ENCODE measurements at regions of chr11 and their contacts with region 1.

Region 1: GRCh38 chr11:3905080-3905953 is 49.9 kb downstream of the STIM1 start:
- DNase-seq: peak; percentile 58
- H3K4me3 Mint-ChIP-seq: peak overlapping the region; percentile 1
- H3K27ac Mint-ChIP-seq: peak overlapping the region; percentile 71
- H3K4me1 Mint-ChIP-seq: peaks cover 67% of the 10 kb centered on the region
- H3K27me3 Mint-ChIP-seq: no peaks in the 10 kb centered on the region

Region 2: DNA sequence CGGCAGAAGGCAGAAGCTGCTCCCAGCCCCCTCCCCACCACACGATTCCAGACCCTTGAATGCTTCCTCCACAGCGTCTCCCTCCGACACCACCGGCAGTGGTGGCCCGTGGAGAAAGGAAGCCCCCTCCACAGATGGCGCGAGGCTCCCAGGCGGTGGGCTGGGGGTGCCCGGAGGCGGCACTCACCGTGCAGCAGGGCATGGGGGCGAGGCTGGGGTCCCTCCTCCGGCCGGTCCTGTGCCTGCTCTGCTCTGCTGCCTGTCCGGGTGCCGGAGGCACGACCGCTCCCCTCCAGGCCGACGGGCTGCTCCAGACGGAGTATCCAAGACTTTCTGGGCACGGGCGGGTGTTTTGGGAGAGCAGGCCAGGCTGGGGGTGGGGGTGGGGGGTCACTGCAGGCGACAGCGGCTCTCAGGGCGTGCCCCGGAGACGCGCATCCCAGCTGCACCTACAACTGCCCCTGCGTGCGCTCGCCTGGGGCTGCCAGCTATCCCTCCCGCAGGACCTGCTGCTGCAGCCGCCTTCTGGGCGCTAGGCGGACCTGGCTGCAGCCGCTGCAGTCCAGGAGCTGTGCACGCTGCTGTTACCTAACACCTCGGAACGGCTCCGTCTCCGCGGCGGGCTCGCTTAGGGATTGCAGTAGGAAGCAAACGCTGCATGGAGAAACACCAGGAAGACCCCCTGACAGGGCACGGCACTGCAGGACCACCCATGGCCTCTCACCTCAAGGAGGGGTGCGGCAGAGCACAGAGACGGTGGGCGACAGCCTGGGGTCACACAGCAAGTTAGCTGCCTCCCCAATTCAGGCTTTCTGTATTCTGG is 701.9 kb before region 1 on chr11:
- intact Hi-C with region 1: no loop called
- DNase-seq: no peak
- H3K4me3 Mint-ChIP-seq: no peak overlapping the region
- H3K27ac Mint-ChIP-seq: no peak overlapping the region
- H3K4me1 Mint-ChIP-seq: no peaks in the 10 kb centered on the region
- H3K27me3 Mint-ChIP-seq: peaks cover 7% of the 10 kb centered on the region

Region 3: DNA sequence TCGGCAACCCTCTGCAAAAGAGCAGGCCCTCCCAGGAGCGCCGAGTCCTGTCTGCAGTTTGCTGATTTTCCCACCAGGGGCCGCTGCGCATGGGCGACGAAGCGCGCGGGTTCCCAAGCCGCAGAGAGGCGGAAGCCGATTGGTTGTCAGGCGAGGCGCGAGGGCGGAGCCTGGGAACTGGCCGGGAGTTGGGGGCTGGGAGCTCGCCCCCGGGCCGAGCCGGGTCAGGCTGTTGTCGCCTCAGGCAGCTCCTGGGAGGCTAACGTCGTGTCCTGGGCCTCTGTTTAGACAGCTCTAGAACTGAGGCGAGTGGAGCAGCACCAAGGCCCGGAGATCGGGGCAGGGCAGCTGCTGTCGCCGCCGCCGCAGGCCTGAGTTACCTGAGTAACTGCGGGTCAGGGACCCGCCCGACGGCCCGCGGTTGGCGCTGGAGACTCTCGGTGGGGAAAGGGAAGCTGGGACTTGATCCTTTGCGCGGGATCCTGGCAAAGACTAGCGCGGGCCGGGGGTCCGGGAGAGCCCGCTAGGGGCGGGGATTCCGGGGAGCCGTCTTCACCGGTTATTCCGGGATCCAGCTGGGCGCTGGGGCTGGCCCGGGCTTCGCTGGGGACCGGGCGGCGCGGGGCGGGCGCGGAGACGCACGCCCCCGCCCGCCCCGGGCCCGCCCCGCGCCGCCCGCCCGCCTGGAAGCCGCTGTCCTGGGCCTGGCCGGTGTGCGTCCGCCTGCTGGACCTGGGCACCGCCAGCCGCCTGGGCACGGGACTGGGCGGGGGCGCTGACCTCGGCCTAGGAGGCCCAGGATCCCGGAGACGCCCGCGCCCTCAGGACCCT is 50.1 kb before region 1 on chr11 and contains the start of gene STIM1:
- intact Hi-C with region 1: loop called (anchors 2 kb)
- DNase-seq: peak; percentile 98
- H3K4me3 Mint-ChIP-seq: peak within 1 kb of the TSS; percentile 99
- H3K27ac Mint-ChIP-seq: peak within 1 kb of the TSS; percentile 96
- H3K4me1 Mint-ChIP-seq: peaks cover 52% of the 10 kb centered on the region
- H3K27me3 Mint-ChIP-seq: no peaks in the 10 kb centered on the region
- total RNA-seq, gene STIM1: 77.6 and 78.0 TPM in 2 replicates

Region 4: DNA sequence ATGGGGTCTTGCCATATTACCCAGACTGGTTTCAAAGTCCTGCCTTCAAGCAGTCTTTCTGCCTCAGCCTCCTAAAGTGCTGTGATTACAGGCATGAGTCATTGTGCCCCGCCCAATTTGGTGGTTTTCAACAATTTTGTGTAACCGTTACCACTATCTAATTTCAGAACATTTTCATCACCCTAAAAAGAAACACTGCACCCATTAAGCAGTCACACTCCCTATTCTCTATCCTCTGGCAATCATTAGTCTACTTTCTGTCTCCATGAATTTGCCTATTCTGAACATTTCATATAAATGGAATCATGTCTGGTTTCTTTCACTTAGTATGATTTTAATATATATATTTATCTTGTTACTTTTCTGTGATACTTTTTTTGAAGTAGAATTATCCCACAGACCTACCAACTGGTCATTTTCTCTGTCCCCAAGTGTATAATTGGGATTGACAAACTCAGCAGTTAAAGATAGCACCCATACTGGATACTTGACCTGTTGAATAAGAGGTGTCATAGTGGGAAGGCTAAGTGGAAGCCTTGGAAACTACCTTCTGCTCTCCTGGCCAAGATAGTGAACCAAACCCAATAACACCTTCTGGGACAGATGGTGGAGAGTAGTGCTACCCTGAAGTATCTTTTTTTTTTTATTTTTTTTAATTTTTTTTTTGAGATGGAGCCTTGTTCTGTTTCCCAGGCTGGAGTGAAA is 15.0 kb after region 1 on chr11:
- intact Hi-C with region 1: loop called (anchors 1 kb)
- DNase-seq: peak; percentile 64
- H3K4me3 Mint-ChIP-seq: no peak overlapping the region
- H3K27ac Mint-ChIP-seq: peak overlapping the region; percentile 50
- H3K4me1 Mint-ChIP-seq: peaks cover 58% of the 10 kb centered on the region
- H3K27me3 Mint-ChIP-seq: no peaks in the 10 kb centered on the region

Region 5: DNA sequence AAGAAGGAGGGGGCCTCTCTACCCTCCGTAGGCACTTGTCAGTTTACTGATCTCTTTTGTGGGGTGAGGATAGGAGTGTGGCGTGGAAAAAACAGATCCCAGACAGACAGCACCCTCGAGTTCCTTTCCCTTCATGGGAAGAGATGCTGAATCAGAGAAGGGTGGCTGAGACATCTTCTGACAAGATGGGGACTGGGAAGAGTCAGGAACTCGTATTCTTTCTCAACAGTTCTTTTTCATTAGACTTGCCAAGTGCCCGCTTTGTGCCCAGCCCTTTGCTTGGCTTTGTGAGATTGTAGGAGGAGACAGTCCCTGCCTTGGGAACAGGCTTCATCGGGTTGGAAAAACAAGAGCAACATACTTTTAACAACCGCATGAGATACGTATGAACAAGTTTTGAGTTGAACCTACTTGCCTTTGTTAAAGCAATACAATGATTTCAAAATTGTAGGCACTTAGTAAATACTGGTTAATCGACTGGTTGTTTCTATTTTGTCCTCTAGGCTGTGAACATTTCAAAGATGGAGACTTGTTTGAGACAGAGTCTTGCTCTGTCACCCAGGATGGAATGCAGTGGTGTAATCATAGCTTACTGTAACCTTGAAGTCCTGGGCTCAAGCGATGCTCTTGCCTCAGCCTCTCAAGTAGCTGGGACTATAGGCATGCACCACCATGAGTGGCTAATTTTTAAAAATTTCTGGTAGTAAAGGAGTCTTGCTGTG is 190.4 kb after region 1 on chr11:
- intact Hi-C with region 1: no loop called
- DNase-seq: no peak
- H3K4me3 Mint-ChIP-seq: peak overlapping the region; percentile 94
- H3K27ac Mint-ChIP-seq: peak overlapping the region; percentile 88
- H3K4me1 Mint-ChIP-seq: peaks cover 74% of the 10 kb centered on the region
- H3K27me3 Mint-ChIP-seq: no peaks in the 10 kb centered on the region

Region 6: GRCh38 chr11:4577761-4578160 is 672.4 kb after region 1 on chr11:
- intact Hi-C with region 1: no loop called
- DNase-seq: no peak
- H3K4me3 Mint-ChIP-seq: no peak overlapping the region
- H3K27ac Mint-ChIP-seq: no peak overlapping the region
- H3K4me1 Mint-ChIP-seq: peaks cover 6% of the 10 kb centered on the region
- H3K27me3 Mint-ChIP-seq: peaks cover 19% of the 10 kb centered on the region

Measured in activated T-helper 2 cell treated with anti-CD3 and anti-CD28 coated beads, Interferon-gamma antibody, Interleukin-2, Interleukin-4, amounts not matched to agents 10 μg/mL and 5 μg/mL and 100 μg/mL, durations not matched to agents 14 hours and 24 hours and 36 hours (primary cell).